Caco-2 (cell line): ENCODE measurements at regions of chr1 and their contacts with region 1.

Region 1: GRCh38 chr1:180213401-180214170 is 16.5 kb upstream of the LHX4 start:
- DNase-seq: peak; percentile 12 to 23
- H3K4me3 ChIP-seq: no peak overlapping the region
- H3K4me3 Mint-ChIP-seq: no peak overlapping the region
- H3K27ac Mint-ChIP-seq: no peak overlapping the region
- H3K4me1 ChIP-seq: no peaks in the 10 kb centered on the region
- H3K4me1 Mint-ChIP-seq: no peaks in the 10 kb centered on the region
- H3K27me3 ChIP-seq: no peaks in the 10 kb centered on the region
- H3K27me3 Mint-ChIP-seq: no peaks in the 10 kb centered on the region
- CTCF ChIP-seq: no peak

Region 2: DNA sequence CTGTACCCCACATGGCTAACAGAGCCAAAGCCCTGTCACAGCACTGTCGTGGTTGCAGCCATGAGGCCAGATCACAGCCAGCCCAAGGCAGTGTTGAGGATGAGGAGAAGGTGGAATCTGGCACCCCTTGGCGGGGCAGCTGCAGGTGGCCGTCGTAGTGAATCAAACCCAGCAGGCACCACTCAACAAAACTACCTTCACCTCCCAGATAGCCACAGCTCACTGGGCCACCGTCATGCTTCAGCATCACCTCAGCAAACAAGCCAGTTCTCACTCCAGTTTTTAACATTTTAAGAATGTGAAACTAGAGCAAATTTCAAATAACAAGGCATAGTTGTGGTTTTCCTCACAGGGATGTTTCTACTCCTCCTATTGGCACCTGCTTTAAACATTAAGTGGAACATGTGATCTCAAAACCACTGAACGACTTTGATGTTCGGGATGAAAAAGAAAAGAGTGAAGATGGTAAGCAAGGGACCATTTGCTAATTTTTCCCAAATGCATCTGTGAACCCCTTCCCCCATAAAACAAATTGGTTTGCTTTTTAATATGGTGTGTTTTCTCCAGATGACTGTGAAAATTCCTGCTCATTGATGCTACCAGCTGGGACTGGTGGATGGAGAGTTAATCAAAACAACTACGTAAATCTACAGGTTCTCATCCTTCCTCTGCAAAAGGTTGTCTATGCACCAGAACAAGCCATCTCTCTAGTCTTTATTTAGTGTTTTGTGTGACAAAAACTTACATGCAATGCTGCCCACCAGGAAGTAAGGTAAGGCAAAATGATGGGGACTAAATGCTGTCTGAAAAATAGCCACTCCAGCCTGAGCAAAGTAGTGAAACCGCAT is 381.5 kb before region 1 on chr1:
- CTCF ChIA-PET with region 1: no interaction called
- POLR2A ChIA-PET with region 1: no interaction called
- intact Hi-C with region 1: no loop called
- DNase-seq: no peak
- H3K4me3 ChIP-seq: no peak overlapping the region
- H3K4me3 Mint-ChIP-seq: no peak overlapping the region
- H3K27ac Mint-ChIP-seq: no peak overlapping the region
- H3K4me1 ChIP-seq: no peaks in the 10 kb centered on the region
- H3K4me1 Mint-ChIP-seq: no peaks in the 10 kb centered on the region
- H3K27me3 ChIP-seq: no peaks in the 10 kb centered on the region
- H3K27me3 Mint-ChIP-seq: no peaks in the 10 kb centered on the region
- CTCF ChIP-seq: no peak

Region 3: GRCh38 chr1:180194546-180195207 is 18.9 kb before region 1 on chr1:
- CTCF ChIA-PET with region 1: no interaction called
- POLR2A ChIA-PET with region 1: interaction called, 10 read pairs
- intact Hi-C with region 1: no loop called
- DNase-seq: no peak
- H3K4me3 ChIP-seq: no peak overlapping the region
- H3K4me3 Mint-ChIP-seq: no peak overlapping the region
- H3K27ac Mint-ChIP-seq: no peak overlapping the region
- H3K4me1 ChIP-seq: peaks cover 4% of the 10 kb centered on the region; the same call in 1 of the 2 replicates
- H3K4me1 Mint-ChIP-seq: peaks cover 9% of the 10 kb centered on the region
- H3K27me3 ChIP-seq: no peaks in the 10 kb centered on the region
- H3K27me3 Mint-ChIP-seq: no peaks in the 10 kb centered on the region
- CTCF ChIP-seq: no peak

Region 4: DNA sequence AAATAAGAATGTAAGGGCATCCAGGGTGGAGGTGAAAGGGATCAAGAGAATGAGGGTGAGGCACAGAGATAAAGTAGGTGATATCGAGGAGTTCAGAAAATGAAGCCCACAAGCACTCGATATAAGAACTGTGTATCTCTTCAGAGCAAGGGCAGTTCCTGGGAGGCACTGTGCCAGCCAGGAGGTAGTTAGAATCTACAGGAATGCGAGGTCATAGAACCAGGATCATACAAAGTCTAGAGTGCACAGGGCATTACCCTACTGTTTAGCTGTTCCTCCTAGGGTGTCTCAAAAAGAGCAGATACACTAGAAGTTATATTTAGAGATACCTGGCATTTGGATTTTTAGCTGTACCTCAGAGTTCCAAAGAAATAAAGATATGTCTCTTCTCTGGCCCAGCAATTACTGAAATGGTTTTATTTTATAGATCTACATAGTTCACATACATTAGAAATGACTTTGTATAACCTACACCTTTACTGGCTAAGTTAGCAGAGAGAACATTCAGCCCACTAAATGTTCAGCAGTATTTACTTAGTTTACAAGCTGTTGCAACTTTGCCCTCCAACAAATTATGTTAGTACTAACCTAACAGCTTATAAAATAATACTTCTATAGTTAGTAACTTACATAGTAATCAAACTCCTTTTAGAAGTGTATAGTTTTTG is 346.7 kb after region 1 on chr1:
- CTCF ChIA-PET with region 1: no interaction called
- POLR2A ChIA-PET with region 1: no interaction called
- intact Hi-C with region 1: no loop called
- DNase-seq: no peak
- H3K4me3 ChIP-seq: no peak overlapping the region
- H3K4me3 Mint-ChIP-seq: no peak overlapping the region
- H3K27ac Mint-ChIP-seq: peak overlapping the region; percentile 16
- H3K4me1 ChIP-seq: peaks cover 34% of the 10 kb centered on the region
- H3K4me1 Mint-ChIP-seq: peaks cover 30% of the 10 kb centered on the region
- H3K27me3 ChIP-seq: no peaks in the 10 kb centered on the region
- H3K27me3 Mint-ChIP-seq: no peaks in the 10 kb centered on the region
- CTCF ChIP-seq: no peak

Region 5: GRCh38 chr1:180778782-180779398 is 565.3 kb after region 1 on chr1:
- CTCF ChIA-PET with region 1: no interaction called
- POLR2A ChIA-PET with region 1: no interaction called
- intact Hi-C with region 1: no loop called
- DNase-seq: peak; percentile 39 to 43
- H3K4me3 ChIP-seq: no peak overlapping the region
- H3K4me3 Mint-ChIP-seq: no peak overlapping the region
- H3K27ac Mint-ChIP-seq: no peak overlapping the region
- H3K4me1 ChIP-seq: 0 out of 2 replicates have a peak, but pooled peaks cover under 1% of the 10 kb centered on the region
- H3K4me1 Mint-ChIP-seq: peaks cover 24% of the 10 kb centered on the region
- H3K27me3 ChIP-seq: no peaks in the 10 kb centered on the region
- H3K27me3 Mint-ChIP-seq: no peaks in the 10 kb centered on the region
- CTCF ChIP-seq: peak; percentile 53 to 81